ENCODE measurements at regions of chr9 and their contacts with region 1.

Region 1: GRCh38 chr9:127785023-127785932 is 556 bp upstream of the CDK9 start:
- DNase-seq: peak; percentile 95
- ATAC-seq: peak; percentile 32
- H3K4me3 Mint-ChIP-seq: peak overlapping the region; percentile 90
- H3K27ac Mint-ChIP-seq: peak overlapping the region; percentile 88
- H3K4me1 Mint-ChIP-seq: peaks cover 56% of the 10 kb centered on the region
- H3K27me3 Mint-ChIP-seq: no peaks in the 10 kb centered on the region

Region 2: DNA sequence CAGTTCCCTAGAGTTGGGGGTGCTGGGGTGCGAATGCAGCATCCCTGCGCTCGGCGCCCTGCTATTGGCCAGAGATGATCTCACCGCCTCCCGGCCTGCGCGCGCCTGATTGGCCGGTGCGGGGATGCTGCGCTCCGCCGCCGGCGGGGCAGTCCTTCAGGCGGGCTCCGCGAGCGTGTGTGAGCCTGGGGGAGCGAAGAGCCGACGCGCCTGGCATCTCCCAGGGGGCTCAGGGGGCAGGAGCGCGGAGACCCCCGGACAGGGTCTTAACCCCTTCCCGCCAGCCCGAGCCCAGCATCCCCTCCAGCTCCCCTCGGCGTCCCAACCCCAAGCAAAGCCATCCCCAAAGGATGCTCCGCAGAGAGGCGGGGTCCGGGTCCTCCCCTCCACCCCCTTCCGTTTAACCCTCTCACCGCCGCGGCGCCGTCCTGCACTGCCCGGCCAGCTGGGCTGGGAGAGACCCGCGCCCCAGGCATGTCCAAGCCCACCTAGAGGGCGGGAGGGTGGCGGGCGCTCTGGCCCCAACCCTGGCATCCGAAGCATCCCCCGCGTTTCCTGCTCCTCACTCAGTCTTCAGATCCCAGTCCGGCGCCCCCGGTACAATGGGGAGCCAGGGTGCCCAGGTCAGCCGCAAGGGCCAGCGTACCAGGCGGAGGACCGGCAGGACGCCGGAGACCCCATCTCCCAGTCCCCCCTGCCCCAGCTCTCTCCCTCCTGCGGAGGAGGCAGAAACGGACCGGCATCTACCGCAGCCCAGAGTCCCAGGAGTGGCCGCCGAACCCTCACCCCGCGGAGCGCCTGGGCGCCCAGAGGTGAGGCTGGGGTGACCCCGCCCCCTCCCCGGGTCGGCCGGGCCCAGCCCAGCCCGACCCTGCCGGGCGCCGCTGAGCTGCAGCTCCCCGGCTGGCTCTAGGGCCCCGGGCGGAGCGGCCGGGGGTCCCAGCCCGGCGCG is 30.9 kb before region 1 on chr9:
- POLR2A ChIA-PET with region 1: no interaction called
- DNase-seq: no peak
- ATAC-seq: no peak
- H3K4me3 Mint-ChIP-seq: no peak overlapping the region
- H3K27ac Mint-ChIP-seq: no peak overlapping the region
- H3K4me1 Mint-ChIP-seq: peaks cover 6% of the 10 kb centered on the region
- H3K27me3 Mint-ChIP-seq: no peaks in the 10 kb centered on the region

Region 3: DNA sequence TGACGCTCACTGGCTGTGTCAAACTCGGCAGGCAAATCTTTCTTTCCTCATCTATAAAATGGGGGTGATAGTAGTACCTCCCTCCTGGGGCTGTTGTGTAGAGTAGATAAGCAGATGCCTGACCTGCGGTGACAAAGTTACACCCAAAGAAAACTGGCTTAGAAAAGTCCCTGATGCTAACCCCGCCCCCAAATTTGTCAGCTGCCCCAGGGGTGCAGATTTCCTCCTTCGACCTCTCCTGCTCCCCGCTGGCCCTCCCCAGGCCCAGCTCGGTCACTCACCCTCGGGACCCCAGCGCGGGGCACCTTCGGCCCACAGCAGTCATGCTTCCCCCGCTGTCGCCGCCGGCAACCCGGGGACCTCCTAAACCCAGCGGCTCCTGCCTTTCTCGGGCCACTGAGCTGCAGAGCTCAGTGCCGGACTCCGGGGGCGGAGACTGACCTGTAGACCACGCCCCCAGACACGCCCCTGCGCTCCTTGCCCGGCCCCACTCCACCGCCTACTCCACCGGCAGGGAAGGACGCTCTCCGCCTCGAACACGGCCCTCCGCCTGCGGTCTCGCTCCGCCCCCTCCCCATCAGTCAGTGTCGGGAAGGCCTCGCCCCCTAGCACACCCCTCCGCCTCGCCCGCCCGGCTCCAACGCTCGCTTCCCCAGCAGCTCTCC is 14.2 kb before region 1 on chr9:
- POLR2A ChIA-PET with region 1: interaction called, 57 read pairs
- DNase-seq: peak; percentile 98
- ATAC-seq: peak; percentile 91
- H3K4me3 Mint-ChIP-seq: peak overlapping the region; percentile 89
- H3K27ac Mint-ChIP-seq: peak overlapping the region; percentile 88
- H3K4me1 Mint-ChIP-seq: peaks cover 62% of the 10 kb centered on the region
- H3K27me3 Mint-ChIP-seq: no peaks in the 10 kb centered on the region

Region 4: DNA sequence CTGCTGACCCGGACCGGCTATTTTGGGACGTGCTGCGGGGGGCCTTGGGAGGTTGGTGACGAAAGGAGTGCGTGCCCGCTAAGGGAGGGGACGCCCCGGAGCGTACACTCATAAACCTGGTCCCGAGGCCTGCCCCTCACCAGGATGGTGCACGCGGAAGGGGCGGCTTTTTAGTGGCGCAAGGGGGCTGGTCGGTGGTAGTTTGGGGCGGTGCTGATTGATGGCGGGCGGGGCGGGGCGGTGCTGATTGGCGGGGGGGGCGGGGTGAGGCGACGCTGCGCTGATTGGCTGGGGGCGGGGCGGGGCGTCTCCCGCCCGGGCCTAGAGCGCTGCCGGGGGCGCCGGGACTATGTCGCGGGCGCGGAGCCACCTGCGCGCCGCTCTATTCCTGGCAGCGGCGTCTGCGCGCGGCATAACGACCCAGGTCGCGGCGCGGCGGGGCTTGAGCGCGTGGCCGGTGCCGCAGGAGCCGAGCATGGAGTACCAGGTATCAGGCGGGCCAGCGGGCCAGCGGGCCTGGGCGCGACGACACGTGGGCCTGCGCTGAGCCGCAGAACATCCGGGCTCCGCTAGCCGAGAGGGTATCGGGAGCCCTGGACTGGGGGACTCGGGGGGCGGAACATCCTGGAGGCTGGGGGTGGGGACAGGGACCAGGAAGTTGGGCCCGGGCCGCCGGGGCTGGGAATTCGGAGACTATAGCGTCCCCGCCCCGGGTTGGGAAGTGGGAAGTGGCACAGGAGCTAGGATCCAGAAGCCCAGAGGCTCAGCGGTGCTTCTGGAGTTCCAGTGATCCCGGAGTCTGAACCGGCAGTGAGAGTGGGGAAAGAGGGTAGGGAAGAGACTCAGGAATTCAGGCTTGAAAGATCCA is 17.5 kb after region 1 on chr9 and contains the start of gene FPGS:
- POLR2A ChIA-PET with region 1: interaction called, 16 read pairs
- DNase-seq: peak; percentile 92
- ATAC-seq: peak; percentile 91
- H3K4me3 Mint-ChIP-seq: peak within 1 kb of the TSS; percentile 97
- H3K27ac Mint-ChIP-seq: peak within 1 kb of the TSS; percentile 98
- H3K4me1 Mint-ChIP-seq: peaks cover 22% of the 10 kb centered on the region
- H3K27me3 Mint-ChIP-seq: no peaks in the 10 kb centered on the region
- total RNA-seq, gene FPGS: 108 to 109 TPM

Region 5: DNA sequence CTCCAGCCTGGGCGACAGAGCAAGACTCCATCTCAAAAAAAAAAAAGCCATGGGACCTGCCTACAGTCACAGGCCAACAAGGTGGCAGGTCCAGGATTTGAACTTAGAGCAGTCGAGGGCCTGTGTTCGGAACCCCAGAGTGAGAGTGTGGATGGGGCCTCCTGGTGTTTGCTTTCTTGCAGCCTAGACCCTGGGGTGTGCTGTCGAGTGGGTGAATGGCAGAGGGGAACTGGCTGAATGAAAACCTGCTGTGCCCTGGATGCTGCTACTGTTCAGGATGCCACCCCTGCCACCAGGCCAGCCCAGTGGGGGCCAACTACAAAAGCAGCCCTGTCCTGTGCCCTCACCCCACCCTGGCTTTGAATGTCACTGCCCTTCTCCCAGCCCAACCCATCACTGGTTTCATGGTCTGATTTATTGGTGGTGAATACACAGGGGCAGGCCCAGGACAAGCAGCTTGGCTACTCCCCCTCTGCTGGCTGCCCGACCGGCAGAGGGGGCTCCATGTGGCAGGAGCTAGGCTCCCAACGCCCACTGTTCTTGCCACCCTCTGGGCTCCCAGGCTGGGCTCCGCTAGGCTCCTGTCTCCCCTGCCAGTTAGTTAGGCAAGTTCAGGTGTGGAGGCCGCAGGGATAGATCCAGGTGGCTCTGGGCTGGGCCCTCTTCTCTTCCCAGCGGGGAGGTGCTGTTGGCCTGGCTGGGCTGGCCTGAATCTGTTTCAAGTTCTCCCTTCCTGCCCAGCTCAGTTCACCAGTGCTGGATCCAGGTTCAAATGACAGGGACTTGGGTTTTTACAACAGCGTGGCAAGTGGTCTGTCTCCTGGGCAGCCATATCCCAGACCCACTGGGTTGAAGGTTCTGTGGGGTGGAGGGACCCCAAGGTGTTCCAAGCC is 29.6 kb after region 1 on chr9:
- POLR2A ChIA-PET with region 1: no interaction called
- DNase-seq: no peak
- ATAC-seq: no peak
- H3K4me3 Mint-ChIP-seq: no peak overlapping the region
- H3K27ac Mint-ChIP-seq: no peak overlapping the region
- H3K4me1 Mint-ChIP-seq: no peaks in the 10 kb centered on the region
- H3K27me3 Mint-ChIP-seq: no peaks in the 10 kb centered on the region

Region 6: GRCh38 chr9:127825319-127826051 is 40.2 kb after region 1 on chr9:
- POLR2A ChIA-PET with region 1: no interaction called
- DNase-seq: no peak
- ATAC-seq: no peak
- H3K4me3 Mint-ChIP-seq: no peak overlapping the region
- H3K27ac Mint-ChIP-seq: no peak overlapping the region
- H3K4me1 Mint-ChIP-seq: no peaks in the 10 kb centered on the region
- H3K27me3 Mint-ChIP-seq: no peaks in the 10 kb centered on the region

Region 7: DNA sequence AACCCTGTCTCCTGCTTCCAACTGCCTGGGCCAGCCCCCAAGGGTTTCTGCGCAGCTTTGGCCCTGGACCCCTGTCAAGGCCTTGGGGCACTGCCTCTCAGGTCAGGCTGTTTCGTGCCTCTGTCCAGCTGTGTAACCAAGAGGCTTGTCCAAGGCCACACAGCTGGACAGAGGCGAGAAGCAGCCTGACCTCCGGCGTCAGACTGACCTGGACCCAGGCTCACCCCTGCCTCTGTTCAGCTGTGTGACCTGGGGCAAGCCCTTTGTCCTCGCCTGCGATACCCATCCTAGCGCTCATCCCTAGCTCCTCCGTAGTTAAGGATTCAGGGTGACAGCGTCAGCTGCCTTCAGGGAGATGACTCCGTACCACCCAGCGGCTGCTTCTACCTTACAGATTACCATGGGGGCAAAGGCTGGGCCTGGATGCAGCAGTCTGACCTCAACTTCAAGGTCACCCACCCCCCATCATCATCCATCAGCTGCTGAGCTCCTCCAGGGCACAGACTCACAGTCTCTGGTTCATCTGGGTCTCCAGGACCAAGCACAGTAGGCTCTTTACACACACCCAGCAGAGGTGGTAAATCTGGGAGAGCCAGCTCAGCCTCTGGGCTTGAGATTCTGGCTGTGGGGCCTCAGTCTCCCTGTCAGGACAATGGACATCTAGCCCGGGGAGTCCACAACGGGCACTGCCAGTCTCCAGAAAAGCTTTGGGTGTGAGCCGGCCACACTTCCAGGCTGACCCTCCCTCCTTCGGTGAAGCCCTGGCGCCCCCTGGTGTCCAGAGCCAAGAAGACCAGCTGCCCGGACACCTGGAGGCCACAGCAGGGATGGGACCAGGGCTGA is 84.3 kb after region 1 on chr9:
- POLR2A ChIA-PET with region 1: interaction called, 11 read pairs
- DNase-seq: peak; percentile 88
- ATAC-seq: peak; percentile 70
- H3K4me3 Mint-ChIP-seq: no peak overlapping the region
- H3K27ac Mint-ChIP-seq: no peak overlapping the region
- H3K4me1 Mint-ChIP-seq: peaks cover 15% of the 10 kb centered on the region
- H3K27me3 Mint-ChIP-seq: no peaks in the 10 kb centered on the region

Region 8: GRCh38 chr9:127916665-127917613 is 131.7 kb after region 1 on chr9 and contains the start of gene ST6GALNAC4:
- POLR2A ChIA-PET with region 1: interaction called, 10 read pairs
- DNase-seq: peak; percentile 97
- ATAC-seq: peak; percentile 90
- H3K4me3 Mint-ChIP-seq: peak within 1 kb of the TSS; percentile 96
- H3K27ac Mint-ChIP-seq: peak within 1 kb of the TSS; percentile 96
- H3K4me1 Mint-ChIP-seq: peaks cover 41% of the 10 kb centered on the region
- H3K27me3 Mint-ChIP-seq: no peaks in the 10 kb centered on the region
- total RNA-seq, gene ST6GALNAC4: 51.1 to 59.5 TPM

Measured in activated naive CD8-positive, alpha-beta T cell treated with anti-CD3 and anti-CD28 coated beads, Interleukin-2, amount 10 ng/mL, durations not matched to agents 7 days and 5 days (primary cell).